ENCODE measurements at regions of chr3 and their contacts with region 1.

Region 1: DNA sequence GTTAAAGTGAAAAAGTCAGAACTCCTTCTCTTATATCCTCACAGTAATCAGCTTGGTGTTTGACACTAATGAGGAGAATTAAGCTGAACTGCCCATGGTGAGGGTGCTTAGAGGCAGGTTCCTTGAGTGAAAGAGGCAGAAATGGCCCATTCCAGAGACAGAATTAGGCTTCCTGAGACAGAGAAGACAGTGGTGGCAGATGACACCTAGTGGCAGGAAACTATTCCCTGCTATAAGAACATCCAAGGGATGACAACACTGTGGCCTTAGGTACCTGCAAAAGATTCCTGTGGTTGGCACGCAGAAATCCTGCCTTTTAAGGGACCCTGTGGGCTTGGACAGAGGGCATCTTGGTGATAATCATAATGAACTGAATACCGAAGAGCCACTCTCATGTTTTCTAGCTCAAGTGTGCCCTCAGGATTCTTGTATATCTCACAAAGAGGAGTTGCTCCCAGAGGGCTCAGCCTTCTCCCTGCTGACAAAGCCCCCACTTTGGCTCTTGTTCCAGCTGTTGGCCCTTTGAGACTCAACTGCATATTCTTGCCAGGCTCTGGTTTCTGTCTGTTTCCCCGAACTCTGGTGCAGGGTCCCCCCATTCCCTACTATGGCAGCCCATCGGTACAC is 56.0 kb downstream of the KBTBD12 start:
- DNase-seq: peak; percentile 63
- ATAC-seq: peak; percentile 96
- H3K4me3 ChIP-seq: no peak overlapping the region
- H3K27ac ChIP-seq: no peak overlapping the region
- H3K4me1 ChIP-seq: no peaks in the 10 kb centered on the region
- H3K27me3 ChIP-seq: peaks cover 44% of the 10 kb centered on the region
- CTCF ChIP-seq: peak; percentile 88

Region 2: GRCh38 chr3:127637546-127637945 is 333.5 kb before region 1 on chr3:
- CTCF ChIA-PET with region 1: no interaction called
- POLR2A ChIA-PET with region 1: no interaction called
- in situ Hi-C with region 1: no loop called
- intact Hi-C with region 1: no loop called
- DNase-seq: no peak
- ATAC-seq: no peak
- H3K4me3 ChIP-seq: no peak overlapping the region
- H3K27ac ChIP-seq: no peak overlapping the region
- H3K4me1 ChIP-seq: no peaks in the 10 kb centered on the region
- H3K27me3 ChIP-seq: no peaks in the 10 kb centered on the region
- CTCF ChIP-seq: no peak

Region 3: GRCh38 chr3:127652231-127652995 is 318.7 kb before region 1 on chr3:
- CTCF ChIA-PET with region 1: no interaction called
- POLR2A ChIA-PET with region 1: no interaction called
- in situ Hi-C with region 1: no loop called
- intact Hi-C with region 1: loop called (anchors 5 kb)
- DNase-seq: peak; percentile 36
- ATAC-seq: peak; percentile 94
- H3K4me3 ChIP-seq: no peak overlapping the region
- H3K27ac ChIP-seq: no peak overlapping the region
- H3K4me1 ChIP-seq: no peaks in the 10 kb centered on the region
- H3K27me3 ChIP-seq: no peaks in the 10 kb centered on the region
- CTCF ChIP-seq: peak; percentile 97

Region 4: GRCh38 chr3:127690823-127691452 is 280.1 kb before region 1 on chr3:
- CTCF ChIA-PET with region 1: interaction called, 5 read pairs
- POLR2A ChIA-PET with region 1: interaction called, 3 read pairs
- in situ Hi-C with region 1: no loop called
- intact Hi-C with region 1: loop called (anchors 2 kb)
- DNase-seq: no peak
- ATAC-seq: peak; percentile 92
- H3K4me3 ChIP-seq: no peak overlapping the region
- H3K27ac ChIP-seq: no peak overlapping the region
- H3K4me1 ChIP-seq: no peaks in the 10 kb centered on the region
- H3K27me3 ChIP-seq: no peaks in the 10 kb centered on the region
- CTCF ChIP-seq: peak; percentile 82

Region 5: GRCh38 chr3:127853681-127854080 is 117.4 kb before region 1 on chr3:
- CTCF ChIA-PET with region 1: no interaction called
- POLR2A ChIA-PET with region 1: no interaction called
- in situ Hi-C with region 1: no loop called
- intact Hi-C with region 1: loop called (anchors 5 kb)
- DNase-seq: no peak
- ATAC-seq: peak; percentile 80
- H3K4me3 ChIP-seq: no peak overlapping the region
- H3K27ac ChIP-seq: no peak overlapping the region
- H3K4me1 ChIP-seq: no peaks in the 10 kb centered on the region
- H3K27me3 ChIP-seq: no peaks in the 10 kb centered on the region
- CTCF ChIP-seq: peak; percentile 2; the same call in 1 of the 2 replicates

Region 6: GRCh38 chr3:128016502-128016901 is 45.4 kb after region 1 on chr3:
- CTCF ChIA-PET with region 1: interaction called, 13 read pairs
- POLR2A ChIA-PET with region 1: interaction called, 3 read pairs
- in situ Hi-C with region 1: no loop called
- intact Hi-C with region 1: no loop called
- DNase-seq: no peak
- ATAC-seq: no peak
- H3K4me3 ChIP-seq: no peak overlapping the region
- H3K27ac ChIP-seq: no peak overlapping the region
- H3K4me1 ChIP-seq: no peaks in the 10 kb centered on the region
- H3K27me3 ChIP-seq: no peaks in the 10 kb centered on the region
- CTCF ChIP-seq: no peak

Region 7: DNA sequence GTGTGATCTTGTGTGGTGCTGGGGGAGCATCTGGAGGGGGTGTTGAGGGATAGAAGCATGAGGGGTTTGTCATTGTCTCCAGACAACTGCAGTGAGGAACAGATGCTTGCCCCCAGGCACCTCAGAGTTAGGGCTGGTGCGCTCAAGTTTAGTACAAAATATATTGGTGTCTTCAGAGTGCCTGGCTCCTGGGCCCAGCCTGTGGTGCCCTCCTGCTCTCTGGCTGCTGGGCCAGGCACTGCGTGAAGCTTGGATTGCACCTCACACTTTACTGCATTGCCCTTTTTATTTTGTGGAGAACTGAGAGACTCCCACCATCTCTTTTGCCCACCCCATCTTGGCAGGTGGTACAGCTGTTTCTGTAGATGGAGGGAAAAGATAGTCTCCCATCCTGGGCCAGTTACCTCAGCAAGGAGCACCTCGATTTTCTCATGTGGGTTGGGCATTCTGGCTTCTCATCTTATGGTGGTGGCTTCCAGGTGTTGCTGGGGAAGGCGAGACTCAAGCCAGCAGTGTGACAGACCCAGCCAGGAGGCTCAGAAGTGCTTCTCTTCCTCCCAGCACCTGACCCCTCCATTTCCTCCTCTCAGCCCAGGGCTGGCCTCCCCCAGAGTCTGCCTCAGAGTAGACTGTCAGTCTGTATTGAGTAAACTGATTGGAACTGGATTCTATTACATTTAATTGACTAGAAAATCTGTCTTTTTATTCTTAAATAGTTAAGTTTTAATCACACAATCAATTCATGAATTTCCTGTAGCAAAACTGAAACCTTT is 355.2 kb after region 1 on chr3:
- CTCF ChIA-PET with region 1: no interaction called
- POLR2A ChIA-PET with region 1: no interaction called
- in situ Hi-C with region 1: no loop called
- intact Hi-C with region 1: no loop called
- DNase-seq: no peak
- ATAC-seq: no peak
- H3K4me3 ChIP-seq: no peak overlapping the region
- H3K27ac ChIP-seq: no peak overlapping the region
- H3K4me1 ChIP-seq: no peaks in the 10 kb centered on the region
- H3K27me3 ChIP-seq: no peaks in the 10 kb centered on the region
- CTCF ChIP-seq: no peak

Measured in Panc1 (cell line).